ENCODE measurements at regions of chr9 and their contacts with region 1.

Region 1: GRCh38 chr9:34328987-34329832 is at the starts of genes KIF24 and NUDT2:
- DNase-seq: peak; percentile 96
- H3K4me3 Mint-ChIP-seq: peak within 1 kb of the TSS; percentile 96
- H3K27ac Mint-ChIP-seq: peak within 1 kb of the TSS; percentile 99
- H3K4me1 Mint-ChIP-seq: peaks cover 29% of the 10 kb centered on the region
- H3K27me3 Mint-ChIP-seq: no peaks in the 10 kb centered on the region
- total RNA-seq, gene KIF24: 5.8 and 6.1 TPM in 2 replicates
- total RNA-seq, gene NUDT2: 31.0 TPM in 2 replicates

Region 2: GRCh38 chr9:33306037-33306436 is 1023.2 kb before region 1 on chr9:
- intact Hi-C with region 1: loop called (anchors 10 kb)
- DNase-seq: peak; percentile 42
- H3K4me3 Mint-ChIP-seq: no peak overlapping the region
- H3K27ac Mint-ChIP-seq: no peak overlapping the region
- H3K4me1 Mint-ChIP-seq: peaks cover 9% of the 10 kb centered on the region
- H3K27me3 Mint-ChIP-seq: no peaks in the 10 kb centered on the region

Region 3: DNA sequence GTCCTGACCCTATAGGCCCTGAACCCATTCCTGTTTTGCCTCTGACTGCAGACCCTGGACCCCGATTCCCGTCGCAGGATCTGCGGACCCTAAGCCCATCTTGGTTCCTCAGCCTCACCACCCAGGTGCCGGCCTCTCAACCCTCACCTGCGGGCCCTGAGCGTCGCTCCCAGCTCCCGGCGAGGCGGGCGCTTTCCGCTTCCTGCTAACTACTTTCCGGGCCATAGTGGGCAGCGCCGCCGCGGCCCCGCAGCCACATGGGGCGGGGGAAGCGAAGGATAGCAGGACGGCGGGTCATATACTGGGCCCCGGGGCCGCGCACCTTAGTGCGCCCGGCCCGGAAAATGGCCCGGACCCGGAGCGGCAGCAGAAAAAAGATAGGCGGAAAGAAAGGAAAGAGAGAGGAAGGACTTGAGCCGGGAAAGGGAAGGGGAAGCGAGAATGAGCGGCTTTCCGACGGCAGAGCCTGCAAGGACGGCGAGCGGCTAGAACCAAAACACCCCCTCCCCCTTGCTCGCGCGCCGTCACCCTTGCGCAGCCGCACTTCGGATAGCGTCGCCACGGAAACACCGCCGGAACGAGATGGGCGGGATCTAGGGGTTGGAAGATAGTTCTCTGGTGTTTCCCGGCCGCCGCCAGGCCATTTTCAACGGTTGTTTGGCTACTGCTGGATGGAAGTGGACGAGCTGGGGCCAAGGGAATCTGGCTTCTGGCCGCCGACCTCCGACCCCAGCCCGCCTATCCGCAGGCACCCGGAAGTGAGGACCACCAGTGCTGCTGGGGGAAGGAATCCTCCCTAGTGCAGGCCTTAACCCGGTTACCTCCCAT is 202.8 kb before region 1 on chr9 and contains the start of gene DCAF12:
- intact Hi-C with region 1: loop called (anchors 1 kb)
- DNase-seq: peak; percentile 89
- H3K4me3 Mint-ChIP-seq: peak within 1 kb of the TSS; percentile 96
- H3K27ac Mint-ChIP-seq: peak within 1 kb of the TSS; percentile 96
- H3K4me1 Mint-ChIP-seq: peaks cover 43% of the 10 kb centered on the region
- H3K27me3 Mint-ChIP-seq: no peaks in the 10 kb centered on the region
- total RNA-seq, gene DCAF12: 49.7 and 52.8 TPM in 2 replicates

Region 4: GRCh38 chr9:34252670-34253459 is 76.3 kb before region 1 on chr9:
- intact Hi-C with region 1: loop called (anchors 5 kb)
- DNase-seq: peak; percentile 50
- H3K4me3 Mint-ChIP-seq: no peak overlapping the region
- H3K27ac Mint-ChIP-seq: no peak overlapping the region
- H3K4me1 Mint-ChIP-seq: peaks cover 15% of the 10 kb centered on the region
- H3K27me3 Mint-ChIP-seq: no peaks in the 10 kb centered on the region

Region 5: GRCh38 chr9:34500623-34501267 is 171.5 kb after region 1 on chr9:
- intact Hi-C with region 1: loop called (anchors 2 kb)
- DNase-seq: peak; percentile 65
- H3K4me3 Mint-ChIP-seq: no peak overlapping the region
- H3K27ac Mint-ChIP-seq: peak overlapping the region; percentile 19
- H3K4me1 Mint-ChIP-seq: peaks cover 4% of the 10 kb centered on the region
- H3K27me3 Mint-ChIP-seq: peaks cover 12% of the 10 kb centered on the region

Region 6: DNA sequence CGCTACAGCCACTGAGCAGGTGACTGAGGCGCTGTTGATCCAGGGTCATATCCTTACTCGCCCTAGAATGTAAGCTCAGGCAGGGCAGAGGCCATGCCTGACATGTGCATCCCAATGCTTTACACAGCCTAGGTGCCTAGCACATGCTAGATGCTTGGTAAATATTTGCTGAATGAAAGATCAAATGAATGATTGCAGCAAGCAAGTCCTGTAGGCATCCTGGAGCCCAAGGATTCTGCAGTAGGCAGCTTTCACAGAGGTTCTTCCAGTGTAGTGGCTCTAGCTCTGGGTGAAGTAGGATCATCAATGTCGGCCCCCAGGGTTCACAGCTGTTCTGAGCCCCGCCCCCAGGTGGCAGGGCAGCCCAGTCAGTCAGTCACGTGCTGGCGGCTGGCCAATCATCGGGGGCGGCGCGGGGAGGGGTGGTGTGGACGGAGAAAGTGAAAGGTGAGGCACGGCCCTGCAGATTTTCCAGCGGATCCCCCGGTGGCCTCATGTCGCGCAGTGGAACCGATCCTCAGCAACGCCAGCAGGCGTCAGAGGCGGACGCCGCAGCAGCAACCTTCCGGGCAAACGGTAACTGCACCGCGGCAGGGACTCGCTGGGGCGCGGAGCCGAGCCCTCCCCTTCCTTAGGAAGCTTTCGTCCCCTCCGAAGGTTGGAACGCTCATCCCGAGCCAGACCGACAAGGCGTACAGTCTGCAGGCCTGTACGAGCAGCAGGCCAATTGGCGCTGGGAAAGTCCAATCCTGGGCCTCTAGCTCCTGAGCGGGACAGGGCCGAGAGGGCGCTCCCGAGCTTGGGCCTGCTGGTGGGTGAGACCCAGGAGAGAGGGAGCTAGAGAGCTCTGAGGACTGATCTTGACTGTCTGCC is 317.2 kb after region 1 on chr9 and contains the start of gene GALT:
- intact Hi-C with region 1: loop called (anchors 1 kb)
- DNase-seq: peak; percentile 95
- H3K4me3 Mint-ChIP-seq: peak within 1 kb of the TSS; percentile 96
- H3K27ac Mint-ChIP-seq: peak within 1 kb of the TSS; percentile 88
- H3K4me1 Mint-ChIP-seq: peaks cover 33% of the 10 kb centered on the region
- H3K27me3 Mint-ChIP-seq: no peaks in the 10 kb centered on the region
- total RNA-seq, gene GALT: 72.0 and 73.7 TPM in 2 replicates